Mammary epithelial cell (primary cell): ENCODE measurements at regions of chr10 and their contacts with region 1.

Region 1: DNA sequence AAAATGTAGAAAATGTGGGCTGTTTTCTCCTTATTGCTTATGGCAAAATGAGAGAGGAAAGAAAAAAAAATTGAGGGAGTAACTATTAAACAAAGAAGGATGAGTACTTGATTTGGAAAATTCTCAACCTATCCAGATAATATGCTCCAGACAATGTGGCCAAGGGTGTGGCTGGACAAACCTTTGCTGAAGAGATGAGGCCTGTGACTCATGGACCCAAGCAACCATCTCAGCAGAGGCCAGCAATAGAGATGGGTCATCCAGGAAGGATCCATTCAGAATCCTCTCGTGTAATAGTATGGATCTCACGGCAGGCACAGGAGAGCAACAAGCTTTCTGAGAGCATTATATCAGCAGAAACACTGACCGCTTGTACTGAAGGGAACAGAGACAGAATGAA is 120.3 kb upstream of the CELF2 start:
- DNase-seq: no peak
- H3K4me3 ChIP-seq: no peak overlapping the region
- H3K27ac ChIP-seq: no peak overlapping the region
- H3K4me1 ChIP-seq: no peaks in the 10 kb centered on the region
- H3K27me3 ChIP-seq: no peaks in the 10 kb centered on the region
- CTCF ChIP-seq: no peak

Region 2: DNA sequence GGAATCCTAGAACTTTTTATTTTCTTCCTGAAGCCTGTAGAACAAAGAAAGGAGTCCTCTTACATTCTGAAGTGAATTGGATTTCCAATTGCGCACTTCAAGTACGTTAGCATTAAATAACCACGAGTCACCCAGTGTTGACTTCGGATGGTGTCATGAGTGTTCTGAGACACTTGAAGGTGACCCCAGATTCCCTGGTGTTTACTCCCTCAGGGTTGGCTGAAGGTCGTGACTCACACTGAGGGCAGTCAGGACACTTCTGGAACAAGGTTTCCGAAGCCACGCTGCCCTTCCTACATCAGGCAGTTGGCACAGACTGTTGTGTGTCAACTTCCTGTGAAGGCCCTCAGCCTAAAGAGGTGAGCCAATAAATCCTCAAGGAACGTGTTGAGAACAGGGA is 66.3 kb before region 1 on chr10:
- CTCF ChIA-PET with region 1: no interaction called
- dilution Hi-C with region 1: no loop called
- in situ Hi-C with region 1: no loop called
- intact Hi-C with region 1: no loop called
- DNase-seq: peak; percentile 49
- H3K4me3 ChIP-seq: no peak overlapping the region
- H3K27ac ChIP-seq: peak overlapping the region; percentile 86
- H3K4me1 ChIP-seq: peaks cover 16% of the 10 kb centered on the region
- H3K27me3 ChIP-seq: no peaks in the 10 kb centered on the region
- CTCF ChIP-seq: no peak

Region 3: DNA sequence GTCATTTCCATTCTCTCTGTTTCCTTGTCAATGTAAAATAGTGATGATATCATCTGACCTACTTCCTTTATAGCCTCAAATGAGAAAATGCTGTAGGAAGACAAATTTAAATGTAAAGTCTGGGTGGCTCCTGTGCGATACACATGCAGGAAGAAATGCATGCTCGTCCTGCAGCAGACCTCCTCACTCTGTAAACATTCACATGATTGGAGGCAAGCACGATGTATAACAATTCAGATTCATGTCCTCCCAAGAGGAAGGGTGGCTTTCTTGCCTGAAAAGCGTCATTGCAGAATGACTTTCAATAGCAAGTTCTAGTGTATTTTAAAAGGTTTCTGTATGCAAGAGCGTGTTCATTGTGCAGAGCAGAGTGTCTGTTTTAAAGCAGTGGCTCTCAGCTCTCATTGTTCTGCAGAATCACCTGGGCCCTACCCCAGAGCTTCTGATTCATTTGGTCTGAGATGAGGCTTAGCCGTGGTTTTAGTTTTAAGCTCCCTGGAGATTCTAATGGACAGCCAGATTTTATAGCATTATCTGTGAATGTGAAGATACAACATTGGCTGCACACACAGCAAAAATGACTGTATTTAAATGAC is 50.0 kb before region 1 on chr10:
- CTCF ChIA-PET with region 1: no interaction called
- dilution Hi-C with region 1: no loop called
- in situ Hi-C with region 1: no loop called
- intact Hi-C with region 1: loop called (anchors 2 kb)
- DNase-seq: no peak
- H3K4me3 ChIP-seq: no peak overlapping the region
- H3K27ac ChIP-seq: no peak overlapping the region
- H3K4me1 ChIP-seq: no peaks in the 10 kb centered on the region
- H3K27me3 ChIP-seq: peaks cover 5% of the 10 kb centered on the region
- CTCF ChIP-seq: no peak